ENCODE measurements at regions of chr2 and their contacts with region 1.

Region 1: DNA sequence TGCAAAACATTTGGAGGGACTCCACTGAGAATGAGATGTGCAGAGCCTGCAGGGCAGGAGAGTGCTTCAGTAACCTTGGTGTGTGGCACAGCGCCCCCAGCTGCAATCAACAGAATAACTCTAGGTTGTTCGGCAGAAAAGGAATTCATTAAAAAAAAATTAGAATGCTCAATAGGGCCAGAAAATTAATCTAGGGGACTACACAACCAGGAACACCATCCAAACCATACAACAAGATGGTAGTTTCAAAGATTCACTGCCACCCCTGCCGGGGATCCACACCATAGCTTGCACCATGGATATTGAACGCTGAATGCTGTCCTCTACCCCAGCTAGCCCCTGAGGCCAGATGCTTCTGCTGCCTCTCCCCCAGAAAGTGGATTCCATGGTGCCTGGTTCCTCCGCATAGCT is 50.1 kb downstream of the THUMPD2 start:
- H3K4me3 Mint-ChIP-seq: no peak overlapping the region
- H3K27ac Mint-ChIP-seq: no peak overlapping the region
- H3K4me1 Mint-ChIP-seq: peaks cover 5% of the 10 kb centered on the region
- H3K27me3 Mint-ChIP-seq: peaks cover 3% of the 10 kb centered on the region

Region 2: DNA sequence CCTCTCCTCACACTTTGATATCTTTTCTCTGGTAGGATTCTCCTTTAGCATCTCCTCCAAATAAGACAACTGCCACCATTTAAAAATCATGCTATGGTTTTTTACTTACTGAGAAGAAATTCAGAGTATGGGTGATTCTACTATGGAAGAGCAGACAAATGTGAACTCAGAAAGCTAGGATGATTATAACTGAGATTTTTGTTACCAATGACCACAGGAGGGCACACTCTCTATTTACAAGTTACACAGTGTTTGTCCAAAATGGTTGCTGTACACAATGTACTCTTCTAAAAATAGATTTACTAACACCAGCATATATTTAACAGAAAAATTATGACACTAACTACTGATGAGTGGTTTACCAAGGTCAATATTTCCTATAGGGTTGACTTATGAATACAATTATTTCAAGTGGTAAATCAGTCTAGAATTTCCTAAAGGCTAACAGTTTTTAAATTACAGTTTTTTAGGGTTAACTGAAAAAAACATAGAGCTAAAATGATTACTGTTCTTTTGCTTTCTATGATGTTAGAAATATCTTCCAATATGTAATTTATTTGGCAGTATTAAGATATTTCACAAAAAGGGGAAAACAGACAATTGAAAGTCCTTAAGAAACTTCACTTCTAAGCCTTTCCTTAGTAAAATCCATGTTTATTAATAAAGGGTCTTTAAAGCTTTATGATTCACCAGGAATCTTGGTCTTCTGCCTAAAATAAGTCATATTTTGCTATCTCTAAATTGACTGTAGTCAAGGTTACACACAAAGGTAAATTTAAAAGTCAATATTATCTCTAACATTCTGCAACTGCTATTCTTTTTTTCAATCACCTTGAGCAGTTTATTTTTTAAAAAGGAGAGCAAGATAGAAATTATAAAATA is 349.1 kb before region 1 on chr2:
- intact Hi-C with region 1: loop called (anchors 2 kb)
- H3K4me3 Mint-ChIP-seq: no peak overlapping the region
- H3K27ac Mint-ChIP-seq: no peak overlapping the region
- H3K4me1 Mint-ChIP-seq: peaks cover 15% of the 10 kb centered on the region
- H3K27me3 Mint-ChIP-seq: no peaks in the 10 kb centered on the region

Region 3: GRCh38 chr2:39568561-39569006 is 160.4 kb before region 1 on chr2:
- intact Hi-C with region 1: no loop called
- H3K4me3 Mint-ChIP-seq: no peak overlapping the region
- H3K27ac Mint-ChIP-seq: no peak overlapping the region
- H3K4me1 Mint-ChIP-seq: no peaks in the 10 kb centered on the region
- H3K27me3 Mint-ChIP-seq: peaks cover 2% of the 10 kb centered on the region